ENCODE measurements at regions of chr2 and their contacts with region 1.

Region 1: DNA sequence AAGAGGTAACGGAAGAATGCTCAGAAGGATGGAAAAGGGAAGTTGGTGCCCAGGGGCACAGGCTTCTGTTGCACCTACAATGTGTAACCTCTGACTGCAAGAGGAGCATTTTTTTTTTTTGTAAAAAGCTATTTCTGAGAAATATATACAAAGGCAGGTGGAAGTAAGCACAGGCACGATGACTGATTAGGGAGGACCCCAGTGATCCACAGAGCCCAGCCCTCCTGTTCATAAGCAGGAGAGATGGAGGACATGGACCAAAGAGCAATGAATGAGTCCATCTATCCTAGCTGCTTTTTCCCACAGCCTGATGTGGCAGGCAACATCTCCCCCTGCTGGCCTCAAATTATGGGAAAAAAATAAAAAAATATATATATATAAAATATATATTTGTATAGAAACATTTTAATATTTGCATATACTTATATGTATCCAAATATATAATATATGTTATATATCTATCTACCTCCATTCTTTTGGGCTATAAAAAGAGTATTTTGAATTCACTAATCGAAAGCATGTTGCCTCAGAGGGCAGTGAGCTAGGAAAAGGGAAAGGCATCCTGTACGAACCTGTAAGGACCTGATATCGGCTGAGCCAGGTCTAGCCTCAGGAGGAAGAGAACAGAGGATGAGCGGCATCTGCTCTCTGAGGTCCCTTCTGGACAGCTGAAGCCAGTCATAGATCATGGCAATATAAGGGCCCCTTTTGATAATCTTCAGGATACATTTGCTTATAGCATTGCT is 166.0 kb upstream of the STK17B start:
- DNase-seq: no peak
- H3K4me3 ChIP-seq: no peak overlapping the region
- H3K27me3 ChIP-seq: no peaks in the 10 kb centered on the region
- CTCF ChIP-seq: peak; percentile 43; the same call in 1 of the 2 replicates

Region 2: DNA sequence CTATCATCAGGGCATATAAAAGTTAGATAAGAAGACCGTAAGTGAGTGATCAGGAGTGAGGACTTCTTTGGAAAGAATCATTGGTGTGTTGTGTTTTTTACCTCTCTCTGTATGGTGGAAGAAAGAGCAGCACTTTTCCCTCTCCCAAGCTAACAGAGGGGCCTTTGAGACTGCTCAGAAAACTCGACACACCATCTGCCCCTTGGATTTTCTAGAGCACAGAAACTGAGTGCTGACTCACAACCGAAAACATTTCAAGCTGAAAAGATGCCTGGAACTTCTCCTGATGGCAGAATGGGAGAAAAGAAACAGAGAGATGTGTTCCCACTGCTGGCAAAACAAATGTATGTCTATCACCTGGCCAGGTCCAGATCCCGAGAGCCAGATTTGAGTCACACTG is 425.3 kb before region 1 on chr2:
- CTCF ChIA-PET with region 1: no interaction called
- POLR2A ChIA-PET with region 1: no interaction called
- DNase-seq: no peak
- H3K4me3 ChIP-seq: no peak overlapping the region
- H3K27me3 ChIP-seq: no peaks in the 10 kb centered on the region
- CTCF ChIP-seq: no peak

Region 3: DNA sequence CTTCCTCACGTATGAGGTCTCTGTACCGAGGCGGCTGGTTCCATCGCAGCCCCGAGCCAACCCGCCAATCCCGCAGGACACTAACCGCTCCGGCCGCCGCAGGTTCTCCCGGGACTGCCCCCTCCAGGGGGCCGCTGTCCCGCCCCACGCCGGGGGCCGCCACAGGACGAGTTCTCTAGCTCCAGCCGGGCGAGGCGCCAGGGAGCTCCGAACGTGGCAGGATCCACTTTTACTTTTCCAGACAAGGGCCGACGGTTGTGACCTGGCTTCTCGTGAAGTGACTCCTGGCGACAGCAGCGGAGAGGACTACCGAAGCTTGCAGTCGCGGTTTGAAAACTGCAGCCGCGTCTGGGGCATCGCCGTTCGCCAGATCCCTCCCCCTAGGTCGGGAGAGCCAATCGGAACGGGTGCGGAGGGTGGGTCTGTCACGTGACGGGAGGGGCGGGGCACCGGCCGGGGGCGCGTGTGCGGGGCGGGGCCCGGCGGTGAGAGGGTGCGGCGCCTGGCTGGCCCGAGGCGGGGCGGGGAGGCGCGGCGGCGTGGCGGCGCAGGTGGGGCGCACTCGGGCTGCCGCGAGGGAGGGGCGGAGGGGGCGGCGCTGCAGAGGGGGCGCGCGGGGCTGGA is 166.0 kb before region 1 on chr2 and contains the start of gene STK17B:
- CTCF ChIA-PET with region 1: interaction called, 10 read pairs
- POLR2A ChIA-PET with region 1: no interaction called
- DNase-seq: peak; percentile 42
- H3K4me3 ChIP-seq: peak within 1 kb of the TSS; percentile 92
- H3K27me3 ChIP-seq: no peaks in the 10 kb centered on the region
- CTCF ChIP-seq: peak; percentile 28; the same call in 1 of the 2 replicates
- polyA plus RNA-seq, gene STK17B: 6.1 and 15.6 TPM in 2 replicates

Region 4: DNA sequence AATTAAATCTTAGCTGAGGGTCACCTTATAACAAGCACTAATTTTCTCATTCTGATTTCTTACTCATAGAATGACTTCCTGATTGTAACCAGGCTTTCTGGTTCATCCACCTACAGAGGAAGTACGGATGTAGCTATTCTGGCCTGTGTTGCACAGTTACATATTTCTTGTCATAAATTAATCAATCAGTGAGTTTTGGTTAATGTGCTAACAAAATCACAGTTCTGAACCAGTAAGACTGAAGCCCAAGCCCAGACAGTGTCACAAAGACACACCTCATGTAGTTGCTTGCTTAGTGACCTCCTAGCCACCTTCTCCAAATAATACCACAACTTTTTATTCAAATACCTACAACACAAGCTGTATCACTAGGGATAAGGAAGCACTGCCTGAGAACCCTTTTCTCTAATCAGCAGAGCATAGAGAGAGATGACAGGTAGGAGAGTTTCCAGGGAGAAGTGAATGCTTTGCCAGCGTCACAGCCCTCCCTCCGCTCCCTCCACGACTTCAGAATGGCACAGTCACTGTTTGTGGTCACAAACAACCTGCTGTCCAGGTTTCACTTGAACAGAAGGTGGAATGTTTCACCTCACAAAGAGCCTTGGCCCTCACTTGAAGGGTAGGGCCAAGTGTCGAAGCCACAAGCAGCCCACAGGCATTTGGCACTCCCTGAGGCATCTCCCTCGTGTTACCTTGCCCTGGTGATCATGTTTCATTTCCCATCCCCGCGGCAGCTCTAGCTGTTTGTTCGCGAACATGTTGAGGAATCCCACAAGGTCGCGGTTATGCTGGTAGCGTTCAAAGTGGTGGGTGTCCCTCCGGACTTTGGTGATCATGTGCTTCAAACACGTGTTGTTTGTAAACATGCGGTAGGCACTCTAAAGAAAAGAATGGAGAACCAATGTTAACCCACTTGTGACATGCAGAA is 45.2 kb before region 1 on chr2:
- CTCF ChIA-PET with region 1: interaction called, 45 read pairs
- POLR2A ChIA-PET with region 1: no interaction called
- DNase-seq: no peak
- H3K4me3 ChIP-seq: no peak overlapping the region
- H3K27me3 ChIP-seq: no peaks in the 10 kb centered on the region
- CTCF ChIP-seq: no peak

Region 5: GRCh38 chr2:196356332-196356731 is 19.0 kb after region 1 on chr2:
- CTCF ChIA-PET with region 1: interaction called, 13 read pairs
- POLR2A ChIA-PET with region 1: no interaction called
- DNase-seq: no peak
- H3K4me3 ChIP-seq: no peak overlapping the region
- H3K27me3 ChIP-seq: no peaks in the 10 kb centered on the region
- CTCF ChIP-seq: no peak

Region 6: DNA sequence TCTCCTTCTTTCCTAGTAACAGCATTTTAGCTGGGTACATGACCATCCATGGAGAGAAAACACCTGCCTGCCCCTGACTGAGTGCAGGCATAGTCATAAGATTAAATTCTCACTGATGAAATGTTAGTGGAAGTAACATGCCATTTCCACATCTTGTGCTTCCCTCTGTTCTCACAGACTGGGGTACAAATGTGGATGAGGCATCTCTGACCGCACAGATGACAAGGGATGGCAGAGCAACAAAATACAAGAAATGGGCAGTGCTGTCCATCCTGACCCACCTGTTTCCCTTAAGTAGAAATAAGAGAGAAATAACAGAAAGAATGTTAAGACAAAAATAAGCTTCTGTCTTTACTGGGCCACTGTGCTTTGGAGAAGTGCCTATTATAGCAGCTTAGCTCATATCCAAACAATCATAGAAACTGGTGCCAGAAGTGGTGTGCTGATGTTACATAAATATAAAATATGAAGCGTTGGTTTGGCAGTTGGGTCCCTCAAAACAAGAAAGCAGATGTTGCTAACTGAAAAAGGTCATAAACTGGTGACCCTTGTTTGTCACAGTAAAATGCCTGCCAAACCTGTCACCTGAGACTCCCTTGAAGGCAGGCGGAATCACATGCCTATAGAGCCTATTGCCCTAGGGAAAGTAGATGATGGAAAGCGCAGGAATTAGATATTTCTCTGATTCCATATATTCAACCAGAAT is 229.7 kb after region 1 on chr2:
- CTCF ChIA-PET with region 1: no interaction called
- POLR2A ChIA-PET with region 1: no interaction called
- DNase-seq: no peak
- H3K4me3 ChIP-seq: no peak overlapping the region
- H3K27me3 ChIP-seq: no peaks in the 10 kb centered on the region
- CTCF ChIP-seq: no peak

Measured in BJ (cell line).